ENCODE measurements at regions of chr5 and their contacts with region 1.

Region 1: GRCh38 chr5:103139264-103139865 is 19.3 kb downstream of the PPIP5K2 start:
- DNase-seq: peak; percentile 38
- H3K4me3 ChIP-seq: no peak overlapping the region
- H3K27ac ChIP-seq: no peak overlapping the region
- H3K27me3 ChIP-seq: no peaks in the 10 kb centered on the region
- CTCF ChIP-seq: peak; percentile 94

Region 2: GRCh38 chr5:102283102-102283797 is 856.1 kb before region 1 on chr5:
- CTCF ChIA-PET with region 1: no interaction called
- POLR2A ChIA-PET with region 1: no interaction called
- DNase-seq: no peak
- H3K4me3 ChIP-seq: no peak overlapping the region
- H3K27ac ChIP-seq: no peak overlapping the region
- H3K27me3 ChIP-seq: no peaks in the 10 kb centered on the region
- CTCF ChIP-seq: no peak

Region 3: DNA sequence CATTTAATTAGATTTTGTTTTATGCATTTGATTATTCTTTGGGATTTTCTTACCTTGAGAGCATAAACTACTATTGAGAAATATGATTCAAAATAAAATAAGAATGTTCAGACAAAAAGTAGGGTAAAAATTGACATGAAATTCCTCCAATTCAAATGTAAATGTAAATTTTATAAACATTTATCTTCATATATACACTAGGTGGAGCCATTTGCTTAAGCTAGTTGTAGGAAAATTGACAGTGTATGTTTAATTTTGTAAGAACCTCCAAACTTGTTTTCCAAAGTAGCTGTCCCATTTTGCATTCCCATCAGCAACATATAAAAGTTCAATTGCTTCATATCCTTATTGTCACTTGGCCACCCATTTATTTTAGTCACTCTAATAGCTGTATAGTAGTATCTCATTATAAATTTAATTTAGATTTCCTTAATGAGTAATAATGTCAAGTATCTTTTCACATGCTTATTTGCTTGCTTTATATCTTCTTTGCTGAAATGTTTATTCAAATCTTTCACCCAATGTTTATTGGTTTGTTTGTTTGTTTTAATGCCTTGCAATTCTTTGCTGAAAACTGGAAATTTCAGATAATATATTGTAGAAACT is 602.9 kb before region 1 on chr5:
- CTCF ChIA-PET with region 1: interaction called, 35 read pairs
- POLR2A ChIA-PET with region 1: no interaction called
- DNase-seq: no peak
- H3K4me3 ChIP-seq: no peak overlapping the region
- H3K27ac ChIP-seq: no peak overlapping the region
- H3K27me3 ChIP-seq: no peaks in the 10 kb centered on the region
- CTCF ChIP-seq: peak; percentile 43

Region 4: DNA sequence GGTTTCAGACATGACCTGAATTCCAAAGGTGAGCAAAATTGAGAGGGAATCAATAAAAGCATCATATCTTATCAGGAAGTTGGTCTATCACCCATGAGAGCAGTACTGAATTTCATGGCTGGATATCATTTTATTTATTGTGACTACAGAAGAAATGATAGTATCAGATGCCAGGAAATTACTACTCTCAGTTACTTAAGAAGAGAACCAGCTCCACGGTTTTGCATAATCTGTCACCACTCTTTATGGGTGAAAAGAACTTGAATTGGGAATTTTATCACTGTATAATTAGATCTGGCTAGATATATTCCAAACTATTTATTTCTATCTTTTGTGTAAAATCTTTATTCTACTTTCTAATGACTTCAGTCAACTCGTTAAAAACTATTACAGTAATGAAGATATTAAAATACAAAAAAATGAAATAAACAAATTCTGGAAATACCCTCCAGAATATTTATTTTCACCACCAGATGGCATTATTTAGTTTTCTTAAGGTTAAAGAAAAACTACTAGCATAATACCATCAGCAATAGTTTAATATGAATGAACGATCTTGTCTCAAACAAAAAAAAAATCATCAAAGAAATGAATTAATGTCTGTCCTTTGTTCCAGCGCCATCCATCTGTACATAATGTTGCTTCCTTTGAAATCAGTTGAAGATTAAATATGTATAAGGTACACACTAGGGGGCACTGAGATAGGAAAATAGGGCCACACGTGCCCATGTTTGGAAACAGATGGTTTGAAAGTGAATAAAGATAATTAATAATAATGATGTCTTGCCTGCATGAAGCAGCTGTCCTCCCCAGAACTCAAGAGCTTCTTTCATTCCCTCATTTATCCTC is 555.9 kb before region 1 on chr5:
- CTCF ChIA-PET with region 1: interaction called, 21 read pairs
- POLR2A ChIA-PET with region 1: no interaction called
- DNase-seq: no peak
- H3K4me3 ChIP-seq: no peak overlapping the region
- H3K27ac ChIP-seq: no peak overlapping the region
- H3K27me3 ChIP-seq: no peaks in the 10 kb centered on the region
- CTCF ChIP-seq: peak; percentile 27; the same call in 1 of the 2 replicates

Region 5: DNA sequence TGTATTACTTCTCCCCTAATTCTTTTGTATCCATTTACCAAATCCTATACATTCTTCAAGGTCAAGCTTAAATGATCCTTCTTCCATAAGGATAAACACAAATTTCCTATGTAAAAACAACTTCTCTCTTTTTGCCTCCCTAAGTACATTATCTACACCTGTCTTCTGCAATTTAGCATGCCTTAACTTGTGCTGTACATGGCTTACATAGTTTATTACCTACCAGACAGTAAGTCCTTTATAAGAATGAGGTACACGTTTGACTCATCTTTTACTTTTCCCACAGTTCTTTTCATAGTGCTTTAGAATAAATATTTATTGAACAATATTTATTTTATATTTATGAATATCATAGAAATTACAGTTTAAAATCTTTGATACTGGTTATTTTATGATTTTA is 52.8 kb before region 1 on chr5:
- CTCF ChIA-PET with region 1: no interaction called
- POLR2A ChIA-PET with region 1: no interaction called
- DNase-seq: no peak
- H3K4me3 ChIP-seq: no peak overlapping the region
- H3K27ac ChIP-seq: no peak overlapping the region
- H3K27me3 ChIP-seq: no peaks in the 10 kb centered on the region
- CTCF ChIP-seq: no peak

Region 6: DNA sequence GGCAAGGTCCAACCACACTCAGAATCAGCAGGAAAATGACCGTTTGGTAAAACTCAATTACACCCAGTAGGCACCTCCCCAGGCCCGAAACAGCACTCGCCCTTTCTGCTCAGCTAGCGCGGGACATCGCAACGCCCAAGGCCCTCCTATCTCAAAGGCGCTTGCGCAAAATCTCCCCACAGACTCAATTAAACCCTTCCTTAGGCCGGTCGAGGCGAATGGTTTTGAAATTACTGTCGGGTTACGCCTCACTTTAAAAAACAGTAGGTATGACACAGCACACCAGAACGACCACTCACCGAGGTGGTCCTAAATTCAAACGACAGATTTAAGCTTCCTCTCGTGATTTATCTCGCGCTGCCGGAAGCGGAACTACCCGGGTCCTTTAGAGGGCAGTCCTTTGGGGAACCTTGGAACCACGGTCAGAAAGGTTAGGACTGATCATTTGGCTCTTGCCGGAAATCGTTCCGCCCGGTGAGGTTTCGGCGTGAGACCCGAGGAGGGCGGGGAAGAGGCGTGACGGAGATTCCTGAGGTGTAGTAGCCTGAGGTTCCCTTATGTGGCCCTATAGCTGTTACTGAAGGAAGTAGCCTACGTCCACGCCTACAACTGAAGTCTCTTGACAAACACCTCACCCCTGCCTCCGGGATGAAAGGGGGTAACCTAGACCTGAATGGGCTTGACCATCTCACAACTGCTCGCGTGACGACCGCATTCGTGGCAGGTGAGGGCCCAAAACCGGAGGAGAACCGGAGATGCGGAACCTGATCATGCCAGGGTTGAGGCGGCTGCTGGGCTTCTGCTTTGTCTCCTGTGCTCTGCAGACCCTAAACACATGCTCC is 19.4 kb before region 1 on chr5 and contains the starts of genes GIN1 and PPIP5K2:
- CTCF ChIA-PET with region 1: interaction called, 18 read pairs
- POLR2A ChIA-PET with region 1: no interaction called
- DNase-seq: peak; percentile 94
- H3K4me3 ChIP-seq: peak within 1 kb of the TSS; percentile 90
- H3K27ac ChIP-seq: peak within 1 kb of the TSS; percentile 95
- H3K27me3 ChIP-seq: no peaks in the 10 kb centered on the region
- CTCF ChIP-seq: no peak
- polyA plus RNA-seq, gene GIN1: 4.3 and 7.7 TPM in 2 replicates
- polyA plus RNA-seq, gene PPIP5K2: 56.7 and 75.9 TPM in 2 replicates

Region 7: DNA sequence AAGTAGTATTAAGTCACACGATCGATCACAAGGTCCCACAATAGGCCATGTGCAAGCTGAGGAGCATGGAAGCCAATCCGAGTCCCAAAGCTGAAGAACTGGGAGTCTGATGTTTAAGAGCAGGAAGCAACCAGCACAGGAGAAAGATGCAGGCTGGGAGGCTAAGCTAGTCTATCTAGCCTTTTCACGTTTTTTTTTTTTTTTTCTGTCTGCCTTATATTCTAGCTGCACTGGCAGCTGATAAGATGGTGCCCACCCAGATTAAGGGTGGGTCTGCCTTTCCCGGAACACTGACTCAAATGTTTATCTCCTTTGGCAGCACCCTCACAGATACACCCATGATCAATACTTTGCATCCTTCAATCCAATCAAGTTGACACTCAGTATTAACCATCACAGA is 12.8 kb before region 1 on chr5:
- CTCF ChIA-PET with region 1: interaction called, 42 read pairs
- POLR2A ChIA-PET with region 1: no interaction called
- DNase-seq: no peak
- H3K4me3 ChIP-seq: no peak overlapping the region
- H3K27ac ChIP-seq: no peak overlapping the region
- H3K27me3 ChIP-seq: no peaks in the 10 kb centered on the region
- CTCF ChIP-seq: no peak

Region 8: GRCh38 chr5:103166706-103167105 is 27.3 kb after region 1 on chr5:
- CTCF ChIA-PET with region 1: interaction called, 18 read pairs
- POLR2A ChIA-PET with region 1: no interaction called
- DNase-seq: no peak
- H3K4me3 ChIP-seq: no peak overlapping the region
- H3K27ac ChIP-seq: no peak overlapping the region
- H3K27me3 ChIP-seq: no peaks in the 10 kb centered on the region
- CTCF ChIP-seq: no peak

Region 9: DNA sequence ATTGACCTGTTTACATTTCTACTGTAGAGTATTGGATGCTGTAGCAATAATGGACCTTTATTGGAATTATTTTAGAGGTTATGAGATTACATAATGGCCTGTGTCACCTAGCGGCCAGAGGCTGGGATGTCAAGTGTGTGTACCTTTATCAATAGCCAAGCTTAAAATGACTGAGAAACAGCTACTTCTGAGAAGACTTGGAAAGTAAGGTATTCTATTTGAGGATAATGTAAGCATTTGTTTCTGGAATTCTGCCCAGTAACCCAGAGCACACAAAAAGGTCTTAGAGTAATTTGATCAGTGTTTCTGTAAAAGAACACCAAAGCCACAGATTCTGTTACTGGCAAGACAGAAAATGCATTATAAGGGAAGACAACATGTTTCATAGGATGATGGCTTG is 236.0 kb after region 1 on chr5:
- CTCF ChIA-PET with region 1: no interaction called
- POLR2A ChIA-PET with region 1: no interaction called
- DNase-seq: peak; percentile 81
- H3K4me3 ChIP-seq: no peak overlapping the region
- H3K27ac ChIP-seq: no peak overlapping the region
- H3K27me3 ChIP-seq: no peaks in the 10 kb centered on the region
- CTCF ChIP-seq: peak; percentile 19; the same call in 1 of the 2 replicates